Activated B cell treated with CpG ODN at 0.5 μM for 24 hours (primary cell): ENCODE measurements at regions of chr6 and their contacts with region 1.

Region 1: DNA sequence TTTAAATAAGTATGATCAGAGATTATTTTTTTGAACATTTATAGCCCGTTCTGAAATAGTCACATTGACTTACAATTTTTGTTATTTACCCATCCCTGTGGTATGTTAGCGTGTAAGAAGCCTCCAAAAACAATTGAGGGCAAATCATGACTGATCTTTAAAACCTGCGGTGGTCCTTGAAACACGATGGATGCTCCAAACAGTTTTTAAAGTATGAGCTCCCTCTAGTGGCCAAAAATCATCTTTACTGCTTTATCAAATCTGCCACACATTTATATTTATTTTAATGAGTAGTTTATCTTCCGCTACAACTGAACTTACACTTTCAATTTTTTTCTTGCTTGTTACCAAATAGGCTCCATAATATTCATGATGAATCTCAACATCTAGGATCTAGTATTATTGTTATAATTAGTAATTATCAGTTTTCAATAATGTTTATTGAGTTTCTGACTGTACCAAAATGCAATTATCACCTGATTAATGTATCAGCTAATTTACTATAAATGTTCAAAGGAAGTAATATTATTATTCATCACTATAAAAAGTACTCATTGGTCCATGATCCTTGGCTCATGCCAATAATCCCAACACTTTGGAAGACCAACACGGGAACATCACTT is 52.2 kb downstream of the MARCKS start:
- DNase-seq: no peak
- ATAC-seq: peak; percentile 37
- H3K4me3 Mint-ChIP-seq: no peak overlapping the region
- H3K27ac Mint-ChIP-seq: no peak overlapping the region
- H3K4me1 Mint-ChIP-seq: no peaks in the 10 kb centered on the region
- H3K27me3 Mint-ChIP-seq: peaks cover 2% of the 10 kb centered on the region
- CTCF ChIP-seq: peak; percentile 63

Region 2: DNA sequence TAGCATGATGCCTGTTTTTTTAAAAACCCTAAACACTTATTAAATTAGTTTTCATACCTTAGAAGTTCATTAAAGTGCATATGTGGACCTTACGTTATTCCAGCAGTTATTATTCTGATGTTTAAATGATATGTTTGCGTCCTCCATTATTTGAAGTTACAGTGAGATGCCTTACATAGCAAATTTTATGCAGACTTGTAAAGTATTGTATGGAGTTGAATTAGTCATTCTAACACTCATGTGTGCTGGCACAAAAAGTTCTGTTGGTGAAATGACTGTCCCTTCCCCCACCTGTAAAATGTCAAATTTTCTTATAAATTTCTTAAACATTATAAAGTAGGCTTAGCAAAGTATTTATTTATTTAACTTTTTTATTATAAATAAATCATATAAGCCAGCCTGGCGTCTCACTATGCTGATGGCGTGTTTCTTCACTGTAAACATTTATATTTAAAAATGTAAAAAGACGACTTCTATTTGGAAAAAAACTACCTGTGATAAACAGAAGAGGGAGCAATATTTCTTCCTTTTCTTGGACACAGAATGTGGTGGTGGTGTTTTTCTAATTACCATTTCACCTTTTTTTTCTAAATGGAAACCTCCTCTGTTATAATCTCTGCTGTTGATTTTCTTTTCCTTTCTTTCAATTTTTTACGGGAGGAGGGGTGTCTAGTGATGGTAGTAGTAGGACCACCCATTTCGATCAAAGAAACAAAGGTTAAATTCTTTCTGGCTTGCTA is 1406.8 kb before region 1 on chr6:
- CTCF ChIA-PET with region 1: no interaction called
- POLR2A ChIA-PET with region 1: no interaction called
- intact Hi-C with region 1: loop called (anchors 10 kb)
- DNase-seq: no peak
- ATAC-seq: no peak
- H3K4me3 Mint-ChIP-seq: no peak overlapping the region
- H3K27ac Mint-ChIP-seq: no peak overlapping the region
- H3K4me1 Mint-ChIP-seq: no peaks in the 10 kb centered on the region
- H3K27me3 Mint-ChIP-seq: no peaks in the 10 kb centered on the region
- CTCF ChIP-seq: no peak

Region 3: GRCh38 chr6:112563368-112563767 is 1346.0 kb before region 1 on chr6:
- CTCF ChIA-PET with region 1: no interaction called
- POLR2A ChIA-PET with region 1: no interaction called
- intact Hi-C with region 1: no loop called
- DNase-seq: no peak
- ATAC-seq: no peak
- H3K4me3 Mint-ChIP-seq: no peak overlapping the region
- H3K27ac Mint-ChIP-seq: no peak overlapping the region
- H3K4me1 Mint-ChIP-seq: no peaks in the 10 kb centered on the region
- H3K27me3 Mint-ChIP-seq: no peaks in the 10 kb centered on the region
- CTCF ChIP-seq: no peak